H1 (cell line): ENCODE measurements at regions of chr15 and their contacts with region 1.

Region 1: GRCh38 chr15:40382580-40383456 is at the start of gene KNSTRN:
- DNase-seq: peak; percentile 93 to 97
- H3K4me3 ChIP-seq: peak within 1 kb of the TSS; percentile 74 to 95 (median 92)
- H3K27ac ChIP-seq: peak within 1 kb of the TSS; percentile 21; the same call in 1 of the 2 replicates
- H3K4me1 ChIP-seq: peaks cover 2 to 8% (median 4%) of the 10 kb centered on the region in 4 experiments; a peak in 4 of 7 replicates
- H3K27me3 ChIP-seq: no peaks in the 10 kb centered on the region
- CTCF ChIP-seq: no peak
- EP300 ChIP-seq: peak in 1 of 2 experiments; percentile 33; a peak in 1 of 3 replicates
- POLR2A ChIP-seq: peak in 1 of 2 experiments; percentile 42; a peak in 1 of 3 replicates
- RAD21 ChIP-seq: no peak
- total RNA-seq, gene KNSTRN: 67.4 and 79.4 TPM in 2 replicates

Region 2: GRCh38 chr15:40038638-40039543 is 343.9 kb before region 1 on chr15 and contains the start of gene SRP14:
- CTCF ChIA-PET with region 1: no interaction called
- POLR2A ChIA-PET with region 1: no interaction called
- DNase-seq: peak; percentile 73 to 91
- H3K4me3 ChIP-seq: peak within 1 kb of the TSS; percentile 58 to 95 (median 88)
- H3K27ac ChIP-seq: peak within 1 kb of the TSS; percentile 80
- H3K4me1 ChIP-seq: peaks cover 0 to 3% (median 0%) of the 10 kb centered on the region in 4 experiments; a peak in 2 of 7 replicates
- H3K27me3 ChIP-seq: no peaks in the 10 kb centered on the region
- CTCF ChIP-seq: no peak
- EP300 ChIP-seq: no peak
- POLR2A ChIP-seq: peak; percentile 77 to 93
- RAD21 ChIP-seq: 0 out of 4 replicates have a peak, but pooled peaks of 1 of the 2 experiments have one; percentile 2
- total RNA-seq, gene SRP14: 180 and 186 TPM in 2 replicates

Region 3: DNA sequence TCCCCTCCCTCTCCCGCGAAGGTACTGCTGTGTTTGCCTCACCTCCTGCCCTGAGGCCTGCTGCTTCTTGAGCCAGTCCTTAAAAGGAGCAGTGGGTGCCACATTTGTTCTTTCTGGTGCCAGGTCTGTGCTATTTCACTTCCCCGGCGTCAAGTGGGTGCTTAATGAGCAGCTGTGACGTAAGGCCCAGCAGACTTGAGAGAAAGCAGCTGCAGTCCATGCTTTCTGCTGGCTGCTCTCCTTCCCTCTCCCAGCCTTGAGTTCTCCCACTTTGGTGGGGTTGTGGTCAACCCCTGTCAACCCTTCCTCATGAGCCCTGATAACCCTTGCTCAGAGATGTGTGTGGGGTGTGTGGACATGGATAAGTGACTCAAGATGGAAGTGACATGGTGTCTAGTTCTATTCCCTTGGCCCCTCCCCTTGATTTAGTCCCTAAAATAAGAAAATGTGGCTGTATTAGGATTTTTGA is 52.4 kb before region 1 on chr15:
- CTCF ChIA-PET with region 1: no interaction called
- POLR2A ChIA-PET with region 1: interaction called, 12 read pairs
- DNase-seq: no peak
- H3K4me3 ChIP-seq: no peak overlapping the region
- H3K27ac ChIP-seq: no peak overlapping the region
- H3K4me1 ChIP-seq: peaks cover 24 to 42% (median 32%) of the 10 kb centered on the region in 4 experiments
- H3K27me3 ChIP-seq: peaks cover 0 to 1% (median 0%) of the 10 kb centered on the region in 4 experiments; a peak in 1 of 7 replicates
- CTCF ChIP-seq: no peak
- EP300 ChIP-seq: no peak
- POLR2A ChIP-seq: no peak
- RAD21 ChIP-seq: no peak

Region 4: DNA sequence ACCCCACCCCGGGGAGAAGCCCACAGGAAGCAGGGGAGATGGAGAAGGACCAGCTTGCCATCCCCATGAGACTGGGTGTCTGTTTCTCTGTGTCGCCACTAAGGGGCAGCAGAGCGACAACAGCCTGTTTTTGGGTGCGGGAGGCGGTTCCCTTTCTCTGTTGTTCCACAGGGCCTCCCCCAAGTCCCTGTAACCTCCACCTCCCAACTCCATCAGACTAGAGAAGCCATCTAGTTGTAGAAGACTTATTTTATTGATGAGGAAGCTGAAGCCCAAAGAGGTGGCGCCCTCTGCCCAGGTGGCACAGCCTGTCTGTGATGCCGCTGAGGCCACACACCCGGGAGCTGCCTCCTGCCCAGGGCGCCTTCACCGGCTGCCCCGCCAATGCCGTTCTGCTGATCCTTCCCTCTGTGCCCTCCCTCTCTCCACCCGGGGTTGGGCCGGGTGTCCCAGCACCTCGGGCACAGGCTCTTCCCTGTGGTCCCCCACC is 38.1 kb before region 1 on chr15:
- CTCF ChIA-PET with region 1: interaction called, 16 read pairs
- POLR2A ChIA-PET with region 1: no interaction called
- DNase-seq: peak in 1 of 2 experiments; percentile 83
- H3K4me3 ChIP-seq: no peak overlapping the region
- H3K27ac ChIP-seq: no peak overlapping the region
- H3K4me1 ChIP-seq: peaks cover 0 to 18% (median 10%) of the 10 kb centered on the region in 4 experiments; a peak in 6 of 7 replicates
- H3K27me3 ChIP-seq: no peaks in the 10 kb centered on the region
- CTCF ChIP-seq: peak; percentile 88 to 94 (median 89)
- EP300 ChIP-seq: no peak
- POLR2A ChIP-seq: no peak
- RAD21 ChIP-seq: peak; percentile 82 to 85

Region 5: DNA sequence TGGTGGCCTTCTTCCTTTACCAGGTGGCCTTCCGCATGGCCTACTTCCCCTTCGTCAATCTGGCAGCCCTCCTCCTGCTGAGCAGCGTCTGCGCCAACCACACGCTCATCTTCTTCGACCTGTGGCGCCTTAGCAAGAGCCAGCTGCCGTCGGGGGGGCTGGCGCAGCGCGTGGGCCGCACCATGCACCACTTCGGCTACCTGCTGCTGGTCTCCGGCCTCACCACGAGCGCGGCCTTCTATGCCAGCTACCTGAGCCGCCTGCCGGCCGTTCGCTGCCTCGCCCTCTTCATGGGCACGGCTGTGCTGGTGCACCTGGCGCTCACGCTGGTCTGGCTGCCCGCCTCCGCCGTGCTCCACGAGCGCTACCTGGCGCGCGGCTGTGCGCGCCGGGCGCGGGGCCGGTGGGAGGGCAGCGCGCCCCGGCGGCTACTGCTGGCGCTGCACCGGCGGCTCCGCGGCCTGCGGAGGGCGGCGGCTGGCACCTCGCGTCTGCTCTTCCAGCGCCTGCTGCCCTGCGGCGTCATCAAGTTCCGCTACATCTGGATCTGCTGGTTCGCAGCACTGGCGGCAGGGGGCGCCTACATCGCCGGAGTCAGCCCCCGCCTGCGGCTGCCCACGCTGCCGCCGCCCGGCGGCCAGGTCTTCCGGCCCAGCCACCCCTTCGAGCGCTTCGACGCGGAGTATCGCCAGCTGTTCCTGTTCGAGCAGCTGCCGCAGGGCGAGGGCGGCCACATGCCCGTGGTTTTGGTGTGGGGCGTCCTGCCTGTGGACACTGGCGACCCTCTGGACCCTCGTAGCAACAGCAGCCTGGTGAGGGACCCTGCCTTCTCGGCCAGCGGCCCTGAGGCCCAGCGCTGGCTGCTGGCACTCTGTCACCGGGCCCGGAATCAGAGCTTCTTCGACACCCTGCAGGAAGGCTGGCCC is 14.9 kb before region 1 on chr15:
- CTCF ChIA-PET with region 1: interaction called, 49 read pairs
- POLR2A ChIA-PET with region 1: interaction called, 24 read pairs
- DNase-seq: peak; percentile 81 to 89
- H3K4me3 ChIP-seq: peak overlapping the region in 3 of 4 experiments; percentile 15 to 46 (median 23); a peak in 4 of 8 replicates
- H3K27ac ChIP-seq: no peak overlapping the region
- H3K4me1 ChIP-seq: peaks cover 2 to 6% (median 4%) of the 10 kb centered on the region in 4 experiments; a peak in 4 of 7 replicates
- H3K27me3 ChIP-seq: peaks cover 5 to 27% (median 23%) of the 10 kb centered on the region in 4 experiments
- CTCF ChIP-seq: peak; percentile 77 to 89 (median 77)
- EP300 ChIP-seq: peak; percentile 58 to 77; a peak in 2 of 3 replicates
- POLR2A ChIP-seq: no peak
- RAD21 ChIP-seq: peak; percentile 41 to 64

Region 6: GRCh38 chr15:40398413-40398873 is 15.6 kb after region 1 on chr15:
- CTCF ChIA-PET with region 1: interaction called, 5 read pairs
- POLR2A ChIA-PET with region 1: interaction called, 10 read pairs
- DNase-seq: no peak
- H3K4me3 ChIP-seq: no peak overlapping the region
- H3K27ac ChIP-seq: no peak overlapping the region
- H3K4me1 ChIP-seq: no peaks in the 10 kb centered on the region
- H3K27me3 ChIP-seq: no peaks in the 10 kb centered on the region
- CTCF ChIP-seq: no peak
- EP300 ChIP-seq: no peak
- POLR2A ChIP-seq: no peak
- RAD21 ChIP-seq: no peak

Region 7: DNA sequence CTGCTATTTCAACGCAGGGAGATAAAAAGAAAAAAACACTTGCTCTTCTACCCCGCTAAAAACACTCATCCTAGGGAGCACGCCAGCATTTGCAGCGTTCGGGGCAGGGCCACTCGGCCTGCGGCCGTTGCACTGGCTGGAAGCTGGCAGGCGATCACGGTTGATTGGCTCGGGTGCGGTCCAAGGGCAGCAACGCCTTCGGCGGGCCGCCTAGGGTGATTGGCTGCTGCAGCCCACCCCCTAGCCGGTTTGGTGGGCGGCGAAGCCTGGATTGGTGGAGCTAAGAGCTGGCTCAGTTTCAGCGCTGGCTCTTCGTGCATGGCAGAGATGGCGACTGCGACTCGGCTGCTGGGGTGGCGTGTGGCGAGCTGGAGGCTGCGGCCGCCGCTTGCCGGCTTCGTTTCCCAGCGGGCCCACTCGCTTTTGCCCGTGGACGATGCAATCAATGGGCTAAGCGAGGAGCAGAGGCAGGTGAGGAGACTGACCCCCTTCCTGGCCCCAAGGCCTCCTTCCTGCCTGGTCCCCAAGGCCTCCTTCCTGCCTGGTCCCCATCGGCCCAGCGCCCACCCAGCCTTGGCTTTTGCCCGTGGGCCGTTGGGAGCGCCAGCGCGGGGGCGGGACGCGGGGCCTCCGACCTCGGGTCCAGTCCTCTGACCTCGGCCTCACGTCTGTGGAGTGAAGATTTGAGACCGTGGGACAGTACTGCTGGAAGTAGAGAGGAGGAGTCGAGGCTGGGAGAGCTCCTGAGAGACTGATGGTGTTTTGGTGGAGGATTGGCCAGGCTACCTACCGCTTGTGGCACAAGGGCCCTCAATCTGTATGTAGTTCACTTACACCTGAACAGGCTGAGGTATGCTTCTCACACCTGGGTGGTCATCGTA is 22.9 kb after region 1 on chr15 and contains the start of gene IVD:
- CTCF ChIA-PET with region 1: interaction called, 9 read pairs
- POLR2A ChIA-PET with region 1: interaction called, 22 read pairs
- DNase-seq: peak; percentile 78 to 92
- H3K4me3 ChIP-seq: peak within 1 kb of the TSS; percentile 67 to 82 (median 74)
- H3K27ac ChIP-seq: peak within 1 kb of the TSS; percentile 72; the same call in 1 of the 2 replicates
- H3K4me1 ChIP-seq: peaks cover 0 to 4% (median 1%) of the 10 kb centered on the region in 4 experiments; a peak in 3 of 7 replicates
- H3K27me3 ChIP-seq: no peaks in the 10 kb centered on the region
- CTCF ChIP-seq: no peak
- EP300 ChIP-seq: no peak
- POLR2A ChIP-seq: peak; percentile 84 to 88
- RAD21 ChIP-seq: no peak
- total RNA-seq, gene IVD: 78.8 and 80.0 TPM in 2 replicates